GM12878 (cell line): ENCODE measurements at regions of chr7 and their contacts with region 1.

Region 1: DNA sequence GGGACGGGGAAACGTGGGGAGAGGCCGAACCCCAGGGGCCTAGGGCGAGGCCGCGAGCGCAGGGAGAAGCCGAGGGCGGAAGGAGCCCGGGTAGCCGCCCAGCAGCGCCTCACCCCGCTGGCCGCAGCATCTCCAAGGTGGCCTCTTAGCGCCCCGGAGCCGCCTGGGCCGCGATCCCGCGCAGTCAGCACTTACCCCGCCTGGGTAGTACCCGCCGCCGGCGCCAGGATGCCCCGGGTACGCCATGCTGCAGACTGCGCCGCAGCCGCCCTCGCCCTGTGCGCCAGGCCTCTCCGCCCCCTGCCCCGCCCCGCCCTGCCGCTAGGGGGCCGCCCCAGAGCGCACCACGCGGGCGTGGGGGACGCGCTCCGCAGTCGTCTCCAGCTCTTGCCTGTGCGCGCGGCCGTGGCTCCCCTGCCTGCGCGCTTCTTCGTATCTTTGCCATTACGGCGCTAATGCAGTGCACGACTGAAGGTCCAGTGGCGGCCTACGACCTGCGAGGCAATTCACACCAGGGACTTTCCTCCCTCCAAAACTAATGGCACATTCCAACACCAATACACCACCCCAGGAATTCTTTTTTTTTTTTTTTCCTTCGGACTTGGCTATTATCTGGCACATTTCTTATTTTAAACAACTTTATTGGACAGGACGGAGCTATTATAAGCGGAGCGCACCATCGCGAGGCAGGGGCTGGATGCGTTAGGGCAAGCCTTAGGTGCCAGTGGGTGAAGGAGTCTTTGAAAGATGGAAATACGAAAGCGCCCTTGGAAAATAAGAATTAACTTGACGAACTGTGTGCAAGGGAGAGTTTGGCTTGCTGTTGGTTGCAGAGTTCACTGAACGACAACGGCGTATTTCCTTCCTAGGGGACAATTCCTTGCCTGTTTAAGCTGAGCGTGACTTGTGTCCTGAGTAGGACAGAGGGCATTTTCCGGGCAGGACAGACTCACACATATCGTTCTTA is at the start of gene SRI:
- DNase-seq: peak; percentile 40
- ATAC-seq: peak; percentile 83
- H3K4me3 ChIP-seq: peak within 1 kb of the TSS; percentile 80
- H3K27ac ChIP-seq: peak within 1 kb of the TSS; percentile 74
- H3K4me1 ChIP-seq: no peaks in the 10 kb centered on the region
- H3K27me3 ChIP-seq: no peaks in the 10 kb centered on the region
- CTCF ChIP-seq: peak; percentile 43 to 73 (median 70); a peak in 5 of 6 replicates
- EP300 ChIP-seq: no peak
- POLR2A ChIP-seq: peak; percentile 95
- RAD21 ChIP-seq: no peak
- polyA plus RNA-seq, gene SRI: 174 to 259 TPM

Region 2: GRCh38 chr7:87876040-87876868 is 343.8 kb before region 1 on chr7 and contains the starts of genes DBF4 and SLC25A40:
- CTCF ChIA-PET with region 1: interaction called, 3 read pairs
- POLR2A ChIA-PET with region 1: no interaction called
- RAD21 ChIA-PET with region 1: no interaction called
- SMC1A ChIA-PET with region 1: interaction called, 3 read pairs
- in situ Hi-C with region 1: no loop called
- intact Hi-C with region 1: loop called (anchors 5 kb)
- DNase-seq: peak; percentile 86
- ATAC-seq: peak; percentile 86
- H3K4me3 ChIP-seq: peak within 1 kb of the TSS; percentile 88
- H3K27ac ChIP-seq: peak within 1 kb of the TSS; percentile 92
- H3K4me1 ChIP-seq: no peaks in the 10 kb centered on the region
- H3K27me3 ChIP-seq: no peaks in the 10 kb centered on the region
- CTCF ChIP-seq: no peak
- EP300 ChIP-seq: peak in 1 of 2 experiments; percentile 34; a peak in 1 of 4 replicates
- POLR2A ChIP-seq: peak; percentile 91
- RAD21 ChIP-seq: no peak
- polyA plus RNA-seq, gene DBF4: 46.1 to 47.0 TPM
- polyA plus RNA-seq, gene SLC25A40: 15.8 to 17.4 TPM

Region 3: DNA sequence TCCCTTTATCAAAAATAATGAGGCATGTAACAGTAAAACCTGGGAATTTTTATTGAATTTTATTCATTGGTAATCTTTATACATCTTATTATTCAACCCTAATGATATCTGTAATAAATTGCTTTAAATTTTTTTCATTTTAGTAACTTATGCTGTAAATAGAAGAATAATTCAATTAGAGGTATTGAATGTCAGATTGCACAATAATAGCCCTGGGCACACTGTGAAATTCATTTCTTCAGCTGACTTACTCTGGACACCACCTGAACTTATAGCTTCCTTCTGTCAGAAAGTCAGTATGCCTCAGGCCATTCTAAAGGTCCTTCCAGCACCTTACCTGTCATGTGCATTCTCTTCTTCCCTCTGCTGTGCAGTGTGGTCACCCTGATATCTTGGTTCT is 226.8 kb before region 1 on chr7:
- CTCF ChIA-PET with region 1: no interaction called
- POLR2A ChIA-PET with region 1: no interaction called
- RAD21 ChIA-PET with region 1: no interaction called
- SMC1A ChIA-PET with region 1: no interaction called
- in situ Hi-C with region 1: no loop called
- intact Hi-C with region 1: no loop called
- DNase-seq: no peak
- ATAC-seq: no peak
- H3K4me3 ChIP-seq: no peak overlapping the region
- H3K27ac ChIP-seq: no peak overlapping the region
- H3K4me1 ChIP-seq: no peaks in the 10 kb centered on the region
- H3K27me3 ChIP-seq: no peaks in the 10 kb centered on the region
- CTCF ChIP-seq: no peak
- EP300 ChIP-seq: no peak
- POLR2A ChIP-seq: no peak
- RAD21 ChIP-seq: no peak

Region 4: GRCh38 chr7:88184848-88185304 is 35.2 kb before region 1 on chr7:
- CTCF ChIA-PET with region 1: interaction called, 5 read pairs
- POLR2A ChIA-PET with region 1: interaction called, 11 read pairs
- RAD21 ChIA-PET with region 1: interaction called, 25 read pairs
- SMC1A ChIA-PET with region 1: interaction called, 12 read pairs
- in situ Hi-C with region 1: no loop called
- intact Hi-C with region 1: no loop called
- DNase-seq: peak; percentile 58
- ATAC-seq: peak; percentile 98
- H3K4me3 ChIP-seq: no peak overlapping the region
- H3K27ac ChIP-seq: peak overlapping the region; percentile 47
- H3K4me1 ChIP-seq: peaks cover 5% of the 10 kb centered on the region; the same call in 1 of the 2 replicates
- H3K27me3 ChIP-seq: no peaks in the 10 kb centered on the region
- CTCF ChIP-seq: no peak
- EP300 ChIP-seq: peak in 1 of 2 experiments; percentile 39; a peak in 1 of 4 replicates
- POLR2A ChIP-seq: no peak
- RAD21 ChIP-seq: no peak

Region 5: GRCh38 chr7:88200789-88201188 is 19.3 kb before region 1 on chr7:
- CTCF ChIA-PET with region 1: interaction called, 15 read pairs
- POLR2A ChIA-PET with region 1: interaction called, 19 read pairs
- RAD21 ChIA-PET with region 1: interaction called, 52 read pairs
- SMC1A ChIA-PET with region 1: interaction called, 78 read pairs
- in situ Hi-C with region 1: no loop called
- intact Hi-C with region 1: loop called (anchors 1 kb)
- DNase-seq: no peak
- ATAC-seq: no peak
- H3K4me3 ChIP-seq: no peak overlapping the region
- H3K27ac ChIP-seq: no peak overlapping the region
- H3K4me1 ChIP-seq: peaks cover 3% of the 10 kb centered on the region; the same call in 1 of the 2 replicates
- H3K27me3 ChIP-seq: no peaks in the 10 kb centered on the region
- CTCF ChIP-seq: no peak
- EP300 ChIP-seq: no peak
- POLR2A ChIP-seq: no peak
- RAD21 ChIP-seq: no peak

Region 6: GRCh38 chr7:88208521-88208920 is 11.5 kb before region 1 on chr7:
- CTCF ChIA-PET with region 1: interaction called, 15 read pairs
- POLR2A ChIA-PET with region 1: interaction called, 19 read pairs
- RAD21 ChIA-PET with region 1: interaction called, 52 read pairs
- SMC1A ChIA-PET with region 1: interaction called, 78 read pairs
- in situ Hi-C with region 1: no loop called
- intact Hi-C with region 1: no loop called
- DNase-seq: no peak
- ATAC-seq: no peak
- H3K4me3 ChIP-seq: no peak overlapping the region
- H3K27ac ChIP-seq: no peak overlapping the region
- H3K4me1 ChIP-seq: no peaks in the 10 kb centered on the region
- H3K27me3 ChIP-seq: no peaks in the 10 kb centered on the region
- CTCF ChIP-seq: no peak
- EP300 ChIP-seq: no peak
- POLR2A ChIP-seq: no peak
- RAD21 ChIP-seq: no peak